ENCODE measurements at regions of chr9 and their contacts with region 1.

Region 1: GRCh38 chr9:127785023-127785932 is 556 bp upstream of the CDK9 start:
- H3K4me3 ChIP-seq: peak overlapping the region; percentile 67
- H3K27ac ChIP-seq: peak overlapping the region; percentile 95
- H3K4me1 ChIP-seq: no peaks in the 10 kb centered on the region
- CTCF ChIP-seq: peak; percentile 67

Region 2: DNA sequence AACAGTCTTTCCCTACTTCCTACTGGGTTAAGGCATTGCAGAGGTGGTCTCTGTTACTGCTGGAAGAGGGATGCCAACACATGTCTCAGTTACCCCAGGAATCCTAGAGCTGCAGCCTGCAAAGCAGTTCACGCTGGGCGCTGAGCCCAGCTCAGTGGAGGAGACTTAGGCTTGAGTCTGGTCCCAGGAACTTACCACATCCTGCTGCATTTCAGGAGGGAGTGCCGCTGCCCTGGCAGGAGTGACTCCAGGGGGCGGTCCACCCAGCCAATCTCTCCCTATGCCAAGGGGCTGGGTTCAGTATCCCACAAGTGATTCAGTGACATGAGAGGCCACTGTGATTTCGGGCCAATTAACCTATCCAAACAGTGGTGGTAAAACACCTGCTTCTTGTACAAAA is 61.8 kb before region 1 on chr9:
- CTCF ChIA-PET with region 1: no interaction called
- POLR2A ChIA-PET with region 1: no interaction called
- H3K4me3 ChIP-seq: no peak overlapping the region
- H3K27ac ChIP-seq: no peak overlapping the region
- H3K4me1 ChIP-seq: no peaks in the 10 kb centered on the region
- CTCF ChIP-seq: no peak

Region 3: GRCh38 chr9:127763918-127764384 is 21.3 kb before region 1 on chr9:
- CTCF ChIA-PET with region 1: interaction called, 14 read pairs
- POLR2A ChIA-PET with region 1: no interaction called
- H3K4me3 ChIP-seq: no peak overlapping the region
- H3K27ac ChIP-seq: no peak overlapping the region
- H3K4me1 ChIP-seq: no peaks in the 10 kb centered on the region
- CTCF ChIP-seq: no peak

Region 4: DNA sequence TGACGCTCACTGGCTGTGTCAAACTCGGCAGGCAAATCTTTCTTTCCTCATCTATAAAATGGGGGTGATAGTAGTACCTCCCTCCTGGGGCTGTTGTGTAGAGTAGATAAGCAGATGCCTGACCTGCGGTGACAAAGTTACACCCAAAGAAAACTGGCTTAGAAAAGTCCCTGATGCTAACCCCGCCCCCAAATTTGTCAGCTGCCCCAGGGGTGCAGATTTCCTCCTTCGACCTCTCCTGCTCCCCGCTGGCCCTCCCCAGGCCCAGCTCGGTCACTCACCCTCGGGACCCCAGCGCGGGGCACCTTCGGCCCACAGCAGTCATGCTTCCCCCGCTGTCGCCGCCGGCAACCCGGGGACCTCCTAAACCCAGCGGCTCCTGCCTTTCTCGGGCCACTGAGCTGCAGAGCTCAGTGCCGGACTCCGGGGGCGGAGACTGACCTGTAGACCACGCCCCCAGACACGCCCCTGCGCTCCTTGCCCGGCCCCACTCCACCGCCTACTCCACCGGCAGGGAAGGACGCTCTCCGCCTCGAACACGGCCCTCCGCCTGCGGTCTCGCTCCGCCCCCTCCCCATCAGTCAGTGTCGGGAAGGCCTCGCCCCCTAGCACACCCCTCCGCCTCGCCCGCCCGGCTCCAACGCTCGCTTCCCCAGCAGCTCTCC is 14.2 kb before region 1 on chr9:
- CTCF ChIA-PET with region 1: interaction called, 14 read pairs
- POLR2A ChIA-PET with region 1: interaction called, 9 read pairs
- H3K4me3 ChIP-seq: peak overlapping the region; percentile 43
- H3K27ac ChIP-seq: no peak overlapping the region
- H3K4me1 ChIP-seq: no peaks in the 10 kb centered on the region
- CTCF ChIP-seq: no peak

Region 5: DNA sequence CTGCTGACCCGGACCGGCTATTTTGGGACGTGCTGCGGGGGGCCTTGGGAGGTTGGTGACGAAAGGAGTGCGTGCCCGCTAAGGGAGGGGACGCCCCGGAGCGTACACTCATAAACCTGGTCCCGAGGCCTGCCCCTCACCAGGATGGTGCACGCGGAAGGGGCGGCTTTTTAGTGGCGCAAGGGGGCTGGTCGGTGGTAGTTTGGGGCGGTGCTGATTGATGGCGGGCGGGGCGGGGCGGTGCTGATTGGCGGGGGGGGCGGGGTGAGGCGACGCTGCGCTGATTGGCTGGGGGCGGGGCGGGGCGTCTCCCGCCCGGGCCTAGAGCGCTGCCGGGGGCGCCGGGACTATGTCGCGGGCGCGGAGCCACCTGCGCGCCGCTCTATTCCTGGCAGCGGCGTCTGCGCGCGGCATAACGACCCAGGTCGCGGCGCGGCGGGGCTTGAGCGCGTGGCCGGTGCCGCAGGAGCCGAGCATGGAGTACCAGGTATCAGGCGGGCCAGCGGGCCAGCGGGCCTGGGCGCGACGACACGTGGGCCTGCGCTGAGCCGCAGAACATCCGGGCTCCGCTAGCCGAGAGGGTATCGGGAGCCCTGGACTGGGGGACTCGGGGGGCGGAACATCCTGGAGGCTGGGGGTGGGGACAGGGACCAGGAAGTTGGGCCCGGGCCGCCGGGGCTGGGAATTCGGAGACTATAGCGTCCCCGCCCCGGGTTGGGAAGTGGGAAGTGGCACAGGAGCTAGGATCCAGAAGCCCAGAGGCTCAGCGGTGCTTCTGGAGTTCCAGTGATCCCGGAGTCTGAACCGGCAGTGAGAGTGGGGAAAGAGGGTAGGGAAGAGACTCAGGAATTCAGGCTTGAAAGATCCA is 17.5 kb after region 1 on chr9 and contains the start of gene FPGS:
- CTCF ChIA-PET with region 1: interaction called, 6 read pairs
- POLR2A ChIA-PET with region 1: interaction called, 10 read pairs
- H3K4me3 ChIP-seq: peak within 1 kb of the TSS; percentile 77
- H3K27ac ChIP-seq: peak within 1 kb of the TSS; percentile 79
- H3K4me1 ChIP-seq: peaks cover 6% of the 10 kb centered on the region; the same call in 1 of the 2 replicates
- CTCF ChIP-seq: no peak